ENCODE measurements at regions of chr9 and their contacts with region 1.

Region 1: DNA sequence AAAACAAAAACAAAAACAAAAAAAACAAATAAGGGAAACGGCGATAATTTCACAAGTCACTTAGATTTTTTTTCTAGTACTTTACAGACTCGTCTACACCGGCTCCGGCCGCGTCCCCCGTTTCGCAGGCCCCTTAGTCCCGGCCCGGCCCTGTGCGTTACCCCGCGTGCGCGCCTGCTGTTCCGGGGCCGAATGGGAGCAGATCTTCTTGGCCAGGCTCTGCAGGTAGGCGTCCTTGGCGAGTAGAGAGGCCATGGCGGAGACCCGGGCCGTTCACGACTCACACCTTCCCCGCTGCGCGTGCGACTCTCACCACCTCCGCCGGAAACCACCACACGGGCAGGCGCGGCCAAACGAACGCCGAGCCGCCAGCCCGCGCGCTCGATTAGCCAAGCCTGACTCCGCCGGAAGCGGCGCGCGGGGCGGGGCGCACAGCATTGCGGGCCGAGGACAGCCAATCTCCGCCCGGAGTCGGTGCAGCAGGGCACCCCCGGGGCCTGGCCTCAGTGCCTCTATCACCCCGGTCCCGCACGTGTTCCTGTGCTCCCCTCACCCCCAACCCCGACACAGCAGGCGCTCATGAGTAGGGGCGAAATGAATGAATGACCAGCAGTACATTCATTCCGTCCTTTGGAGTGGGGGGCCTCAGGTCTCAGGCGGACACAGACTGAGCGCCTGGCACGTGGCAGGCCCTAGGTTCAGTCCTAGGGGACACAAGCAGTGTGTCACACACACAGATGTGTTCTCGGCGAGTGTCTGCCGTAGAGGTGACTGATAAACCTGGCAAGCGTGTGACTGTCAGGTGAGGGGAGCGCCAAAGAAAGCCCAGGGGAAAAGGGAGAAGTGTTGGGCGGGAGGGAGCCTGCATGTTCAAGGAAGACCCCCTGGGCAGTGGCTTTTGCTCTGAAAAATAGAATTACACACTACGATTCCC is at the start of gene SURF6:
- DNase-seq: peak; percentile 96
- ATAC-seq: peak; percentile 97
- H3K4me3 ChIP-seq: peak within 1 kb of the TSS; percentile 94
- H3K27ac ChIP-seq: peak within 1 kb of the TSS; percentile 81
- H3K4me1 ChIP-seq: peaks cover 25% of the 10 kb centered on the region
- H3K27me3 ChIP-seq: no peaks in the 10 kb centered on the region
- CTCF ChIP-seq: peak; percentile 5
- total RNA-seq, gene SURF6: 15.9 TPM

Region 2: GRCh38 chr9:133184962-133185361 is 151.2 kb before region 1 on chr9:
- intact Hi-C with region 1: loop called (anchors 10 kb)
- DNase-seq: no peak
- ATAC-seq: peak; percentile 75
- H3K4me3 ChIP-seq: no peak overlapping the region
- H3K27ac ChIP-seq: no peak overlapping the region
- H3K4me1 ChIP-seq: peaks cover 5% of the 10 kb centered on the region
- H3K27me3 ChIP-seq: peaks cover 19% of the 10 kb centered on the region
- CTCF ChIP-seq: peak; percentile 56

Region 3: DNA sequence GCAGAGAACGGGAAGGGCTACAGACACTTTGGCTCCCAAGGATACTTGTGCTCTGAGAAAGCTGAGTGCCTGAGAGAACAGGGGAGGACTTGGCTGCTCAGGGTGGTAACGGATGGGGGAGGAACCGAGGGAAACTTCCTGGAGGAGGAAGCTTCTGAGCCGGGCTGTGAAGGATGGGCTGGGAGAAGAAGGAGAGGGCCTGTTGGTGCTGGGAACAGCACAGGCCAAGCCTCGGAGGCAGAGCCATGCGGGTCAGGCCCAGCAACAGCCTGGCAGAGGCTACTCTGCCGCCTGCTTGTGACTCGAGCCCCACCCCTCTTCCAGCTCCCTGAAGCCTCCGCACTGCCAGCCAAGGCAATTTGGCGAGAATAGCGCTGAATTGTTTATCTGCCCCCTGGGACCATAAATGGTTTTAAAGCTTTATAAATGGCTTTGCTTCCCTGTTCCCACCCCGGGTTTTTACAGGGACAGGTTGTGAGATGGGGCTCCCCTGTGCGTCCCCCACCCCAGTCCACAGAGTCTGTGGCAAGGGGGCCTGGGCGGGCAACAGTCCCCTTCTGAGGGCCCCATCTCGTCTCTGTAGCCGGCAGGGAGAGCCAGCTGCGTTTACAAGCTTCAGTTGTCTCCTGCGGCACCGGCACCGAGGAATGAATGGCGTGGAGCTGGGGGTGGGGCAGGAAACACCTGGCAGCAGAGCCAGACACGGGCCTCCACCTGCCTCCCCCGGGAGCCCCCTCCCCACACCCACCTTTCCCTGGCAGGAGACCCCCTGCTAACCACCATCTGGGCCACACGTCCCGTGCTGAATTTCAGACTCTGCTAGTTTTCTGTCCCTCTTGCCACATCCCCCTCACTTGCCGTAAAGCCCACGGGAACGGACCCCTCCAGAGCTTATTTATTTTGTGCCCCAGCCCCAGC is 248.7 kb after region 1 on chr9:
- intact Hi-C with region 1: no loop called
- DNase-seq: no peak
- ATAC-seq: peak; percentile 29
- H3K4me3 ChIP-seq: no peak overlapping the region
- H3K27ac ChIP-seq: peak overlapping the region; percentile 11
- H3K4me1 ChIP-seq: peaks cover 20% of the 10 kb centered on the region
- H3K27me3 ChIP-seq: peaks cover 27% of the 10 kb centered on the region
- CTCF ChIP-seq: no peak